ENCODE measurements at regions of chr13 and their contacts with region 1.

Region 1: DNA sequence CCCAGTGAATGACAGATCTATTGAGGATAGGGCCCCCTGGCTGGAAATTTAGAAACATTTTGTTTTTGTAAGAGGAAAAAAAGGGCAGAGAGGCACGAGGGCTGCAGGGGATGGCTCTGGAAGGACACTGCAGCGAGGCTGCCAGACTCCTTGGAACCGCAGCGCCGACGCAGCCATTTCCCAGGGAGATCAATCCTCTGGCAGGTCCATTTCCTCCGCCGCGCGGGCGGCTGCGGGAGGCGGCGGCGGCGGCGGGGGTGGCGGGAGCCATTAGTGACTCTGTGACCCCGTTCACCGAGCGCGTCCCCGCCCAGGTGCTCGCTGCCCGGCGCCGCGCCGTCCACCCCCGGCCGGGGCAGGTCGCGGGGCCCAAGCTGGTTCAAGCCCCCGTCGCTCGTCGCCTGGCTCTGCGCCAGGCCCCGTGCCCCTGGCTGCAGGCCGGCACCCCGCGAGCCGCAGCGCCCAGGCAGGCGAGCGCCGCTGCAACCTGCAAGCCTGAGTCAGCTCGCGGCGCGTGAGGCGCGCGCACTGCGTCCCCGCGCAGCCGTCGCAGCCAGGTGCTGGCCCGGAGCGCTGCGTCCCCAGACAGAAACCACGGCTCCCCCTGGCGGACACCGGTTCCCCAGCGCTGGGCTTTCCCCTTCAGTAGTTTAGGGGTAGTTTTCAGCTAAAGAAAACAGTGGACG is 192.6 kb downstream of the KATNAL1 start:
- DNase-seq: peak; percentile 90 to 91
- H3K4me3 ChIP-seq: peak overlapping the region in 2 of 3 donors; percentile 38 to 48
- H3K27ac ChIP-seq: peak overlapping the region; percentile 43 to 84 (median 79)
- H3K4me1 ChIP-seq: peaks cover 22 to 28% of the 10 kb centered on the region in 2 donors
- H3K27me3 ChIP-seq: no peaks in the 10 kb centered on the region
- CTCF ChIP-seq: peak in 5 of 6 experiments; percentile 74 to 89 (median 87)
- POLR2A ChIP-seq: peak; percentile 31 to 70

Region 2: DNA sequence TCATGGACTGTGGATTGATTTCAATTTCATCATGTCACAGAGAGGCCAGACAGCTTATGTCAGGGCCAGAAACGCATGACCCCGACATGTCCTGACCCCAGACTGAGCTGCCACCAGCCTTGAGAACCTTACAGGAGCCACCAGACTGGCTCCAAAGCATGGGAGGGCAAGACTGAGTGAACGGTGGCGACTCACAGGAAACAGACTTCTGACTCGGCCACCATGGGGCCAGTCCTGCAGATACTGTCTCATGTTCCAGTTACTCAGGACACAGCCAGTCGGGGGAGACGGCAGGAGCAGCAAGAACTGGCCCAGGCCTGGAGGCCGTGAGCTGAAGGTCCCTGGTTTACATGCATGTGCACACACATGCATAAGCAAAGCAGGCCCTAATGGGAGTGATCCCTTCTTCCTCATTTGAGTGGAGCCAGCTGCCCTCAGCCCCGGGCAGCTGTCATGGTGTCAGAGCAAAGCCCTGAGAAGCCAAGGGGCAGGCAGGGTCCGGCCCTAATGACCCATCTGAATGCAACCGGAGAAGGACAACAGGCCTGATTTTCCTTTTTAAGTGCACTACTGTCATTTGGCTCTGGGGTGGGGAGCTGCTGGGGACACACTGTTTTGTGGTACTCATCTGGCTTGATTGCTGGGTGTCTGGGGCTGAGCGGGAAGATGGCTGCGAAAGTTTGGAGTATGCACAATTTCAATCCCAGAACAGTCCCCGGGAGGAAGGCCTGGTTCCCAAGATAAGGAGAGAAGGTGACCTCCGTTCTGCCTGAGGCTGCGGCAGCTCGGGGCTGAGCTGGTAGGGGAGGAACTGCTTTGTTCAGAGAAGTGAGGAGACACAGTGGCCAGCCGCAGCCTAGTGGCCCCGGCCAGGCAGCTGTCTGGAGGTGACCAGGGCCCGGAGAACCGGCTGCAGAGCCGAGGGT is 601.1 kb before region 1 on chr13:
- intact Hi-C with region 1: loop called (anchors 5 kb)
- DNase-seq: no peak
- H3K4me3 ChIP-seq: no peak overlapping the region
- H3K27ac ChIP-seq: no peak overlapping the region
- H3K4me1 ChIP-seq: no peaks in the 10 kb centered on the region
- H3K27me3 ChIP-seq: no peaks in the 10 kb centered on the region
- CTCF ChIP-seq: no peak
- POLR2A ChIP-seq: no peak

Region 3: DNA sequence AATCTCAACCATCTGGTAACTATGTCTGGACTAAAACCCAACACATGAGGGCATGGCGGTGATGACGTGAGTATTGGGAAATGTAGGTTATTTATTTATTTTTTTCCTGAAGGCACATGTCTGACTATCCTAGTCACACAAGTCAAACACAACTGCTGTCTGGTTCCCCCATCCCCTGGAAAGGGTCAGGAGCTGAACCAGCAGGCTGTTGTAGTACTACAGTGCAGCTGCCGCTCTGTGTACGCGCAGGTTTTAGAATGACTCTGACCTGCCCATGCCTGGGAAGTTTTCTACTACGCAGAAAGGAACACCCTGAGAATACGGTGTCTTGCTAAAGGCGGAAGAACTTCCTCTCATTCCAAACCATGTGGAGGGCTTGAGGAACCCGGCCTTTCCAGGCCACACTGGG is 520.4 kb before region 1 on chr13:
- intact Hi-C with region 1: loop called (anchors 5 kb)
- DNase-seq: peak; percentile 42 to 48
- H3K4me3 ChIP-seq: peak overlapping the region; percentile 7 to 74 (median 69)
- H3K27ac ChIP-seq: peak overlapping the region; percentile 53 to 84 (median 69)
- H3K4me1 ChIP-seq: peaks cover 4 to 15% of the 10 kb centered on the region in 2 donors
- H3K27me3 ChIP-seq: no peaks in the 10 kb centered on the region
- CTCF ChIP-seq: no peak
- POLR2A ChIP-seq: no peak

Region 4: DNA sequence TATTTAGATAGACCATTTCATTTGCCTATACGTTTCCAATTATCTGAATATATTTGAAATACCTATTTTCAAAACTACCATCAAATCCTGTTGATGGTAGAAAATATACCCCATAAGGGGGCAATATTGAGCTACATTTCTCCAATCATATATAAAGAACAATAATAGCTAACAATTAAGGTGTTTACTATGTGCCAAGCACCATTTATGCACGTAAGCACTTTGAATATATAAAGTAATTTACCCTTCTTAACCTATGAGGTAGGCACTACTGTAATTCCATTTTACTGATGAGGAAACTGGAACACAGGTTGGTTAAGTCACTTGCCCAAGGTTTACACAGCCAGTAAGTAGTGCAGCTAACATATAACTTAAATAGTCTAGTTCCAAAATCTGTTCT is 343.5 kb before region 1 on chr13:
- intact Hi-C with region 1: loop called (anchors 5 kb)
- DNase-seq: no peak
- H3K4me3 ChIP-seq: no peak overlapping the region
- H3K27ac ChIP-seq: no peak overlapping the region
- H3K4me1 ChIP-seq: peaks cover 4 to 12% of the 10 kb centered on the region in 2 donors
- H3K27me3 ChIP-seq: no peaks in the 10 kb centered on the region
- CTCF ChIP-seq: peak in 3 of 6 experiments; percentile 37 to 40 (median 38)
- POLR2A ChIP-seq: no peak

Region 5: GRCh38 chr13:29850224-29850898 is 264.4 kb before region 1 on chr13 and contains the start of gene UBL3:
- intact Hi-C with region 1: loop called (anchors 10 kb)
- DNase-seq: peak; percentile 98
- H3K4me3 ChIP-seq: peak within 1 kb of the TSS; percentile 38 to 77 (median 54)
- H3K27ac ChIP-seq: peak within 1 kb of the TSS; percentile 99 to 100 (median 99)
- H3K4me1 ChIP-seq: peaks cover 0 to 11% of the 10 kb centered on the region in 2 donors
- H3K27me3 ChIP-seq: no peaks in the 10 kb centered on the region
- CTCF ChIP-seq: peak in 1 of 6 experiments; percentile 7
- POLR2A ChIP-seq: peak in 1 of 2 donors; percentile 92
- total RNA-seq, gene UBL3: 59.0 to 79.0 (median 65.1) TPM

Region 6: GRCh38 chr13:30017880-30018279 is 96.8 kb before region 1 on chr13:
- intact Hi-C with region 1: no loop called
- DNase-seq: no peak
- H3K4me3 ChIP-seq: no peak overlapping the region
- H3K27ac ChIP-seq: no peak overlapping the region
- H3K4me1 ChIP-seq: no peaks in the 10 kb centered on the region
- H3K27me3 ChIP-seq: no peaks in the 10 kb centered on the region
- CTCF ChIP-seq: no peak
- POLR2A ChIP-seq: no peak

Region 7: GRCh38 chr13:30376426-30377311 is 262.0 kb after region 1 on chr13:
- intact Hi-C with region 1: no loop called
- DNase-seq: peak; percentile 79 to 82
- H3K4me3 ChIP-seq: no peak overlapping the region
- H3K27ac ChIP-seq: peak overlapping the region; percentile 72 to 81 (median 74)
- H3K4me1 ChIP-seq: peaks cover 14 to 30% of the 10 kb centered on the region in 2 donors
- H3K27me3 ChIP-seq: no peaks in the 10 kb centered on the region
- CTCF ChIP-seq: no peak
- POLR2A ChIP-seq: no peak

Region 8: DNA sequence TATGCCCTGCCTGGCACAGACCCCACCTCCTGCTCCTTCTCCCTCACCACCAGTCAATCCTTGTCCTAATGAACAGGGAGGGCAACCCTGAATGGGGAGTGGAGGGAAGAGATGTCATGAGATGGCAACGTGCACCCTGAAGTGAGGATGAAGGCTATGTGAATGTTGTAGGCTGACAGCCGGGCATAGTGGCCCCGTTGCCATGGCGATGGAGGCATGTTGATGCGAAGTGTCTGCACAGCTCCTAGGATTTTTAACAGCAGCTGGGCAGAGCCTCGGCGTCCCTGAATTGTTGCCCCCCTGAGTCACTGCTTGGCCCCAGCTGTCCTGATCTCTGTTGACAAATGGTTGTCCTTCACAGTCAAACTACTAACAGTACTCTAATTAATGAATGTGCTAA is 615.8 kb after region 1 on chr13:
- intact Hi-C with region 1: no loop called
- DNase-seq: no peak
- H3K4me3 ChIP-seq: no peak overlapping the region
- H3K27ac ChIP-seq: no peak overlapping the region
- H3K4me1 ChIP-seq: no peaks in the 10 kb centered on the region
- H3K27me3 ChIP-seq: no peaks in the 10 kb centered on the region
- CTCF ChIP-seq: no peak
- POLR2A ChIP-seq: no peak